Cardiac septum (tissue), 1 donor: ENCODE measurements at regions of chr6 and their contacts with region 1.

Region 1: DNA sequence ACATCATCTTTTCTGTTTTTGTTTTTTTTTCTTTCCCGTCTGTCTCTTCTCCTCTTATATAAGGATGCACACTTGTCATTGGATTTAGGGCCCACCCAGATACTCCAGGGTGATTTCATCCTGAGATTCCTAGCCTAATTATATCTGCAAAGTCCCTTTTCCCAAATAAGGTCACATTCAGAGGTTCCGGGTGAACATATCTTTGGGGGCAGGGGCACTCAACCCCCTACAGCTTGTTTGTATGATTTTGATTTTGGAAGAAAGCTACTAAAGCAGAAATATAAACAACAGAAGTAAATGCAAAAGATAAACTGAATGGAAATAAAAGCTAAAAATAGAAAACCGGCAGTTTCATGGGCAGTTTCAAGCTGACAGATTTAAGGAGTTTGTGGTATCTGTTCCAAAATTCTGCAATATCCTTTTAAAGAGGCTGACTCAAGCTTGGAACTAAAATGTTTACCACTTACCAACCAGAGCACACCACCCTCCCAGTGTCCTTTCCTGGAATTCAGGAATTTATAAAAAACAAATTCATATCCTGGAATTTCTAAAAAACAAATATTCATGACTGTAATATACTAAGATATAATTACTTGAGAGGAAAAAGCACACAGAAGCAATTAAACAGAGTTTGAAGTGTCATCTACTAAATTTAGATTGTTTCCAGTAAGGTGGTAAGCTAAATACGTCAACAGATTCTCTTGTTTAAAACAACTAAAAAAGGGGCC is 100.0 kb upstream of the CARMIL1 start:
- DNase-seq: no peak

Region 2: GRCh38 chr6:25085756-25086155 is 93.5 kb before region 1 on chr6:
- intact Hi-C with region 1: loop called (anchors 5 kb)
- DNase-seq: no peak